ENCODE measurements at regions of chr11 and their contacts with region 1.

Region 1: GRCh38 chr11:44596525-44597276 is 31.2 kb downstream of the CD82 start:
- DNase-seq: peak; percentile 87
- H3K4me3 Mint-ChIP-seq: peak overlapping the region; percentile 71
- H3K27ac Mint-ChIP-seq: peak overlapping the region; percentile 96
- H3K4me1 Mint-ChIP-seq: peaks cover 89% of the 10 kb centered on the region
- H3K27me3 Mint-ChIP-seq: no peaks in the 10 kb centered on the region

Region 2: DNA sequence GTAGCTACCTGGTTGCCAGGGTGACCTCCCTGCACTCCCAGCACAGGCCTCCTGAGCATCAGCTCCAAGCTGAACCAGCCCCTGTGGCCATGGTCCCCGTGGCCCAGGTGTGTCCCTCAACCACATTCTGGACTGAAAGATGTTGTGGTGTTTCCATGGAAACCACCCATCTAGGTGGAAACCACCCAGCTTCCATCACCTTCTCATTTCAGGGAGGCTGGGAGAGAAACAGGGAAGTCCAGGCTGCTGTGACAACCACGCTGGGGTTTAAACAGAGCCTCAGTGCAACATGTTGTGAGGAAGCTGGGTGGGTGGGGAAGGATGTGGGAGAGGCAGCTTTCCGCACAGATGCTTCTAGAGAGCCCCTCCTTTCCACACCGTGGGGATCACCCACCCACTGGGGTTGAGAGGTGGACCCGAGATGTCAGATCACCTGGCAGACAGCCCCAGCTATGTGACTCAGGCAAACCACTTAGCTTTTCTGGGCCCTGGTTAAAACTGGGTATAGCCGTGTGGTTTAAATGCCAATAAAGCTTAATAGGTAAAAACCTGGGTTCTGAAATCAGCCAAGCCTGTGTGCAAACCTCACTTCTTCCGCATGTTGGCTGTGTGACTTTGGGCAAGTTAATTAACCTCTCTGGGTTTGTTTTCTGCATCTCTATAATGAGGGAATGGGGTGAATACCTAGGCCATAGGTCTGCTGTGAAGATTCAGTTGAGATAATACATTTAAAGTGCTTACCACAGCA is 15.2 kb after region 1 on chr11:
- intact Hi-C with region 1: loop called (anchors 1 kb)
- DNase-seq: peak; percentile 68
- H3K4me3 Mint-ChIP-seq: peak overlapping the region; percentile 15
- H3K27ac Mint-ChIP-seq: peak overlapping the region; percentile 82
- H3K4me1 Mint-ChIP-seq: peaks cover 92% of the 10 kb centered on the region
- H3K27me3 Mint-ChIP-seq: no peaks in the 10 kb centered on the region